ENCODE measurements at regions of chr2 and their contacts with region 1.

Region 1: GRCh38 chr2:44981136-44982108 is 27.8 kb downstream of the SIX2 start:
- DNase-seq: peak; percentile 77
- ATAC-seq: peak; percentile 36
- H3K4me3 ChIP-seq: no peak overlapping the region
- H3K4me3 Mint-ChIP-seq: no peak overlapping the region
- H3K27ac ChIP-seq: no peak overlapping the region
- H3K27ac Mint-ChIP-seq: no peak overlapping the region
- H3K4me1 ChIP-seq: no peaks in the 10 kb centered on the region
- H3K4me1 Mint-ChIP-seq: peaks cover 2% of the 10 kb centered on the region
- H3K27me3 ChIP-seq: peaks cover 0 to 14% (median 5%) of the 10 kb centered on the region in 4 experiments
- H3K27me3 Mint-ChIP-seq: peaks cover 17% of the 10 kb centered on the region
- CTCF ChIP-seq: peak; percentile 91

Region 2: DNA sequence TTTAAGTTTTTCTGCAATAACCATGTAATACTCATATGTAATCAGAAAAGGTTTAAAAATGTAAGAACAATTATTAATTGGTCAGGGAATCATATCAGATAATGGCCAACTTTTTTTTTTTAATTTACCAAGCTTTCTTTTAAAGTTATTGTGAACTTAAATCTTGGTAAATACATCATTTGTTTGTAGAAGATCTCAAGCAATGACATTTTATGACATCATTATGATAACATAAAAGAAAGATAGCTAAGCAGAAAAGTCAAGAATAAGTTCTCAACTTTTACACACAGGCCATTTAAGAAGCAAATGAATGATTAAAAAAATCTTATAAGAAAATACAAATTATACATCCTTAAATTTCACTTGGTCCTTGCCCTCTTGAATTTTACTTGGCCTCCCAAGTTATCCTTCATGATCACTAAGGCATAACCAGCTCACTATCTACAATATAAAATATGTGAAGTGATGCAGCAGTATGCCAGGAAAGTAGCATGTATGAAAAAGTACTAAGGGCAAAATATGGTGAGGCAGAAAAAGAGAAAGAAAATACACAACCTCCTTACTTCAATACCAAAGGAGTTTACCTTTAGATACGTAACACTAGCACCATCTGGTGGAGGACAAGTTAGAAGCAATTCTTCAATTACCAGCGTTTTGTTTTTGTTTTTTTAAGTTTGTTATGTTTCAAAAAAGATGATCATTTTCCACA is 513.0 kb after region 1 on chr2:
- CTCF ChIA-PET with region 1: interaction called, 93 read pairs
- POLR2A ChIA-PET with region 1: no interaction called
- intact Hi-C with region 1: no loop called
- DNase-seq: peak; percentile 58
- ATAC-seq: no peak
- H3K4me3 ChIP-seq: no peak overlapping the region
- H3K4me3 Mint-ChIP-seq: no peak overlapping the region
- H3K27ac ChIP-seq: no peak overlapping the region
- H3K27ac Mint-ChIP-seq: no peak overlapping the region
- H3K4me1 ChIP-seq: no peaks in the 10 kb centered on the region
- H3K4me1 Mint-ChIP-seq: peaks cover 12% of the 10 kb centered on the region
- H3K27me3 ChIP-seq: no peaks in the 10 kb centered on the region
- H3K27me3 Mint-ChIP-seq: no peaks in the 10 kb centered on the region
- CTCF ChIP-seq: peak; percentile 86

Region 3: GRCh38 chr2:45578056-45578809 is 596.8 kb after region 1 on chr2:
- CTCF ChIA-PET with region 1: interaction called, 73 read pairs
- POLR2A ChIA-PET with region 1: no interaction called
- intact Hi-C with region 1: no loop called
- DNase-seq: peak; percentile 49
- ATAC-seq: peak; percentile 49
- H3K4me3 ChIP-seq: no peak overlapping the region
- H3K4me3 Mint-ChIP-seq: no peak overlapping the region
- H3K27ac ChIP-seq: no peak overlapping the region
- H3K27ac Mint-ChIP-seq: no peak overlapping the region
- H3K4me1 ChIP-seq: no peaks in the 10 kb centered on the region
- H3K4me1 Mint-ChIP-seq: peaks cover 1% of the 10 kb centered on the region
- H3K27me3 ChIP-seq: no peaks in the 10 kb centered on the region
- H3K27me3 Mint-ChIP-seq: no peaks in the 10 kb centered on the region
- CTCF ChIP-seq: peak; percentile 59